ENCODE measurements at regions of chr2 and their contacts with region 1.

Region 1: DNA sequence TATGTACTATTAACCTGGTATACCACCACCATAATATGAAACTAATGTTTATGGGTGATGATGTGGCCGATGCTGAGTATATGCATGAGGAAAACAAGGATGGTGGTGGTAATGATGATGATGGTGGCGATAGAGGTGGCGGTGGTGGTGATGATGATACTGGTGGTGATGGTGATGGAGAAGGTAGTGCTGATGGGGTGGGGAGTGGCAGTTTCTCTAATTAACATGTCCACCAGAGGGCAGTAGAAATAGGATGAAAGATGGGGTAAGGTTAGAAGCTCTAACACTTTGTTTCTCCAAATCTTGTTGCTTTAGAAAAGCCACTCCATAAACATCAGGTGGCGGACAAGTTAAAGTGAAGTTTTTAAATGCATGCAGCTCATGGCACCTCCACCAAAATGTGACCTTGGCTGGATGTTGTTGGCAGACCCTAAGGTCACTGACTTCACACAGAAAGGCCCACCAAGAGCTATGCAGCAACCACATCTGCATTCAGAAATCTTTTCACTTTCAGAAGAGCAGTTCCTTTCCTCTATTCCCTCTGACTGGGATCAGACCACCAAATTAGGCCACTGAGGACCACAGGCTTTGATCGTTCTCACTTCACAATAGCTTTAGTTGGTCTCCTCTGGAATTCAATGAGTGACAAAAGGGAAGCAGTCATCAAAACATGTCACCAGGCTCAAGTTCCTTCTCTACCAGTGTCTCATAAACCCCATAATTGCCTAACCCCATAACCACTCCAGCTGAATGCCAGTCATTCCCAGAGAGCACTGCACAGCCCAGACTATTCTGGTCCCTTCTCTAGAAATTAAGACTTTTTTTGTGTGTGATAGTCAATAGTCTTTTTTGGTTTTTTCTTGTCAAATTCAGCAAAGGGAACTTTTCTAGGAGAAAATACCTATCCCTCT is 7.5 kb upstream of the BCL11A start:
- DNase-seq: no peak
- H3K4me3 ChIP-seq: no peak overlapping the region
- H3K27ac ChIP-seq: no peak overlapping the region
- H3K4me1 ChIP-seq: peaks cover 0 to 17% (median 14%) of the 10 kb centered on the region in 4 donors
- H3K27me3 ChIP-seq: peaks cover 53% of the 10 kb centered on the region
- CTCF ChIP-seq: peak; percentile 47 to 59 (median 56)
- EP300 ChIP-seq: no peak
- POLR2A ChIP-seq: no peak

Region 2: GRCh38 chr2:59296279-59296678 is 1264.7 kb before region 1 on chr2:
- in situ Hi-C with region 1: loop called in 3 of 4 experiments (anchors 10 to 25 kb)
- intact Hi-C with region 1: loop called (anchors 10 kb)
- DNase-seq: no peak
- H3K4me3 ChIP-seq: no peak overlapping the region
- H3K27ac ChIP-seq: no peak overlapping the region
- H3K4me1 ChIP-seq: peaks cover 0 to 3% (median 0%) of the 10 kb centered on the region in 4 donors
- H3K27me3 ChIP-seq: peaks cover under 1% of the 10 kb centered on the region
- CTCF ChIP-seq: no peak
- EP300 ChIP-seq: no peak
- POLR2A ChIP-seq: no peak

Region 3: GRCh38 chr2:59301466-59302402 is 1259.3 kb before region 1 on chr2:
- in situ Hi-C with region 1: loop called in 3 of 4 experiments (anchors 10 to 25 kb)
- intact Hi-C with region 1: loop called (anchors 10 kb)
- DNase-seq: peak; percentile 21
- H3K4me3 ChIP-seq: no peak overlapping the region
- H3K27ac ChIP-seq: no peak overlapping the region
- H3K4me1 ChIP-seq: peaks cover 0 to 6% (median 0%) of the 10 kb centered on the region in 4 donors
- H3K27me3 ChIP-seq: peaks cover 4% of the 10 kb centered on the region
- CTCF ChIP-seq: peak; percentile 49 to 60 (median 58)
- EP300 ChIP-seq: no peak
- POLR2A ChIP-seq: no peak

Region 4: DNA sequence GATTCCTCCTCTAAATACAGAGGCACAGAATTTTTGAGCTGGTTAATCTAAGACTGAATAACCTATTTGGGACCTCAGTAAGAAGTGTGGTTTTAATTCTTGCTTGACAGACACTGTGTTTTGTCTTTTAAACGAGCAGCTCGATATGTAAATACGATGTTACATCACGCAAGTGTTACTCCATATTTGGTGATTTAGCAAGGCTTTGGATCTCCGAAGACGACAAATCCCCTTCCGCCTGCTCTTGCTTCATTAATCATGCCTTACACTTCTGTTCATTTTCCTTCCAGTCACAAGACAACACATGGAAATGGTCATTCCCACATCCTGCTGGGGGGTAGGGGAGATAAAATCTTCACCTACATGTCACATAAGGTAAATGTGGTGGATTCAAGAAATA is 16.9 kb before region 1 on chr2:
- in situ Hi-C with region 1: no loop called
- intact Hi-C with region 1: no loop called
- DNase-seq: no peak
- H3K4me3 ChIP-seq: no peak overlapping the region
- H3K27ac ChIP-seq: peak overlapping the region; percentile 84 to 88 (median 88)
- H3K4me1 ChIP-seq: peaks cover 11 to 34% (median 22%) of the 10 kb centered on the region in 4 donors
- H3K27me3 ChIP-seq: peaks cover 2% of the 10 kb centered on the region
- CTCF ChIP-seq: no peak
- EP300 ChIP-seq: peak; percentile 89
- POLR2A ChIP-seq: no peak

Region 5: DNA sequence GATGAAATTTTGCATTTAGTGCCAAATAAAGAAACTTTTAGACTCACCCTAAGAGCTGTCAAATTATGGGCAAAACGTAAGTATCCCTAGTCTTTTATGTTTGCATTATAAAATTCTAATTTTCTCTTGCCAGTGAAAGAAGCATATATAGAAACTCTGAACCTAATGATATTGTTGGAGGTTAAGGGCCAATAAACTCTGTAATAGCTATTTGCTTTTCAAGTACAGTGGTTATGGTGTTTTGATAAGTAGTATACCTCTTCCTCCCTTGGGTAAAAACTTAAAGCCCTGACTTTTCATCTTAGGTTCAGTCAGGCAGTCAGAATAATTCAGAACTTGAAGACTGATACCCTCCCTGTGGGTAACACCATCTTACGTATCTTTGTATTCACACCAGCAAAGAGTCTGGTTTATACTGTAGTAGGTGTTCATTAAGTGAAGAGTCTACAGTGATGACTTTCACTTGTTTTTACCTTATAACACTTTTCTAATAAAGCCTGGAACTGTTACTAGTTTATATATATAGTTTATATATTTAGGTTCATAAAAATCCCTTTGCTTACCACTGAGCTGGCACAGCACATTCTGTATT is 214.2 kb after region 1 on chr2:
- in situ Hi-C with region 1: no loop called
- intact Hi-C with region 1: no loop called
- DNase-seq: no peak
- H3K4me3 ChIP-seq: no peak overlapping the region
- H3K27ac ChIP-seq: no peak overlapping the region
- H3K4me1 ChIP-seq: peaks cover 0 to 14% (median 4%) of the 10 kb centered on the region in 4 donors
- H3K27me3 ChIP-seq: no peaks in the 10 kb centered on the region
- CTCF ChIP-seq: no peak
- EP300 ChIP-seq: no peak
- POLR2A ChIP-seq: no peak

Region 6: DNA sequence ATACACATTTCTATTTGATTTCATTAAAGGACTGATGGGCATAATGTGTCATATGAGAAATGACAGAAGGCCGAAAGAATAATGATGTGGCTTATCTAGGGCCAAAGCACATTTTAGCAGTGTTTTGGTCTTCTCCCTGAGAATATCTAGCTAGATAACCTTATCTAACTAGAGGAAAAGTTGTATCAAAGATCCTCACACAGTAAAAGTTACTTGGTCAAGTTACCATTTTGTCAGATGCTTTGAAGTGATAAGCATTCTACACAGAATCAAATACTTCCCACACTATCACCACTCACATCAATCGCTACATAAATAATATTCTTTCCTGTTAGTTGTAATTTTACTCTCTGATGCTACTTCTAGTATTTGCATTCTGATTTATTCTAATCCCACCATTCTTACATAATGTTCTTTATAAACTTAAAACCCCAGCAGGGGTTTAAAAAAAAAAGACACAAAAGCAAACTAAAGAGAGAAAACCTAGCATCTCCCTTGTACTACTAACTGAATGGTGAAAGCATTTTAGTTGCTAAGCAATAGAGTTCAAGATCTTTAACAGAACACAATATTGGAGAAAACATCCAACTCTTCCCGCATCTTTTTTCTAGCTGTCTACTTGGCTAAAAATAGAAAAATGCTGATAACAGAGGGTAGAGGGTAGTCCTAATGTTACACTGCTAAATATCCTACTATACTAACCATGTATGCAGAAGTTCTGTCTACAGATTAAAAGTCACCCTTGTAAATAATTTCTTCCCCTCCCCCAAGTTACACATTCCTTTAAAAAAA is 969.2 kb after region 1 on chr2:
- in situ Hi-C with region 1: no loop called
- intact Hi-C with region 1: no loop called
- DNase-seq: no peak
- H3K4me3 ChIP-seq: no peak overlapping the region
- H3K27ac ChIP-seq: no peak overlapping the region
- H3K4me1 ChIP-seq: peaks cover 8 to 38% (median 15%) of the 10 kb centered on the region in 4 donors
- H3K27me3 ChIP-seq: no peaks in the 10 kb centered on the region
- CTCF ChIP-seq: no peak
- EP300 ChIP-seq: no peak
- POLR2A ChIP-seq: no peak